ENCODE measurements at regions of chr17 and their contacts with region 1.

Region 1: DNA sequence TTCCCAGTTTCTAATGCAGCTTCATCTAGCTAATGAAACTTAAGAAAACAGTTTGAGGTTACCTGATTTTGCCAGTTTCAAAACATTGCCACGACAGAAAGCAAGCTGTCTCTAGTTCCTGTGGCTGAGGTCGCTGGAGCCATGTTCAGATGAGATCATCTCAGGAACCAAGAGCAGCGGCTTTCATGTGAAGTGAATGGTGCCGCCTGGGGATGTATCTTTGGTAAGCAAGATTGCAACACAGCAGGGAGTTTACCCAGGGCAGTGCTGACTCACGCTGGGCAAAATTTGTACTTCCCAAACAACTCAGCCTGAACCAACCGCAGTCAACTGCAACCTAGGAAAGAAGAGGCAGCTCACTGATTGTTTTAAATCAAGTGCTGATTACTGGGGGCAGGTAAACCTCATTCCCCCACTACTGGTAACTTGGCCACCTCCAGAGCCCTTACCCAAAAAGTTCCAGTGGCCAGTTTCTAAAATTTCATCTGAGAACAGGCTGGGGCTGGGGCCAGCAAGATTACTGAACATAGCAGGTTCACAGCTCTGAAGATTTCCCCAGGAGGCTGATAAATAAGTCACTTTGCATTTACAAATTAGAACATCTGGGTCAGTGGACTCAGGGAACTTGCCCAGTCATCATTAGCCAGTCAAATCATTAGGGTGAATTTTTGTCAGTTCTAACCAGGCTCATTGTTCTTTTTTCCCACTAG is at the start of gene RFFL:
- DNase-seq: peak; percentile 98
- H3K4me3 Mint-ChIP-seq: peak within 1 kb of the TSS; percentile 73
- H3K27ac Mint-ChIP-seq: peak within 1 kb of the TSS; percentile 95
- H3K4me1 Mint-ChIP-seq: peaks cover 26% of the 10 kb centered on the region
- H3K27me3 Mint-ChIP-seq: no peaks in the 10 kb centered on the region
- CTCF ChIP-seq: no peak
- total RNA-seq, gene RFFL: 22.0 and 22.6 TPM in 2 replicates

Region 2: GRCh38 chr17:35022536-35023063 is 41.1 kb before region 1 on chr17:
- CTCF ChIA-PET with region 1: interaction called, 5 read pairs
- POLR2A ChIA-PET with region 1: interaction called, 28 read pairs
- intact Hi-C with region 1: no loop called
- DNase-seq: peak; percentile 79
- H3K4me3 Mint-ChIP-seq: no peak overlapping the region
- H3K27ac Mint-ChIP-seq: peak overlapping the region; percentile 39
- H3K4me1 Mint-ChIP-seq: peaks cover 19% of the 10 kb centered on the region
- H3K27me3 Mint-ChIP-seq: no peaks in the 10 kb centered on the region
- CTCF ChIP-seq: no peak

Region 3: GRCh38 chr17:35082073-35082657 is 18.5 kb after region 1 on chr17:
- CTCF ChIA-PET with region 1: interaction called, 6 read pairs
- POLR2A ChIA-PET with region 1: interaction called, 119 read pairs
- intact Hi-C with region 1: loop called (anchors 2 kb)
- DNase-seq: peak; percentile 93
- H3K4me3 Mint-ChIP-seq: no peak overlapping the region
- H3K27ac Mint-ChIP-seq: no peak overlapping the region
- H3K4me1 Mint-ChIP-seq: peaks cover 25% of the 10 kb centered on the region
- H3K27me3 Mint-ChIP-seq: no peaks in the 10 kb centered on the region
- CTCF ChIP-seq: no peak

Region 4: DNA sequence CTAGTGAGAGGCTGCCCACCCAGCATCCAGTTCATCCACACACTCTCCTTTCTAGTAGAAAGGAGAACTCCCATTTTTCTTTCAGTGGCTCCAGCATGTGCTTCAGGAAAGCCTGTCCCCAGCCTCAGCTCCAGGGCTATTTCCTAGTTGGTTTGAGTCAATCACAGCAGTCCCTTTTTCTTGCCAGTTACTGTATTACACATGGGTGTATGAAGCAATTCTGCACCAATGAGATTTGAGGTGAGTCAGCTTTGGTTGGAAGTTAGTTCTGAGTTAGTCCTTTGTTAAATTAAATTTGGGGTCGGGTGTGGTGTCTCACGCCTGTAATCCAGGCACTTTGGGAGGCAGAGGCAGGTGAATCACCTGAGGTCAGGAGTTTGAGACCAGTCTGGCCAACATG is 31.2 kb after region 1 on chr17:
- CTCF ChIA-PET with region 1: interaction called, 12 read pairs
- POLR2A ChIA-PET with region 1: interaction called, 14 read pairs
- intact Hi-C with region 1: no loop called
- DNase-seq: peak; percentile 91
- H3K4me3 Mint-ChIP-seq: no peak overlapping the region
- H3K27ac Mint-ChIP-seq: peak overlapping the region; percentile 79
- H3K4me1 Mint-ChIP-seq: peaks cover 7% of the 10 kb centered on the region
- H3K27me3 Mint-ChIP-seq: no peaks in the 10 kb centered on the region
- CTCF ChIP-seq: no peak